Mammary epithelial cell (primary cell): ENCODE measurements at regions of chr16 and their contacts with region 1.

Region 1: GRCh38 chr16:84791088-84791487 is 28.7 kb upstream of the CRISPLD2 start:
- DNase-seq: no peak
- H3K4me3 ChIP-seq: no peak overlapping the region
- H3K27ac ChIP-seq: no peak overlapping the region
- H3K4me1 ChIP-seq: no peaks in the 10 kb centered on the region
- H3K27me3 ChIP-seq: no peaks in the 10 kb centered on the region
- CTCF ChIP-seq: no peak

Region 2: DNA sequence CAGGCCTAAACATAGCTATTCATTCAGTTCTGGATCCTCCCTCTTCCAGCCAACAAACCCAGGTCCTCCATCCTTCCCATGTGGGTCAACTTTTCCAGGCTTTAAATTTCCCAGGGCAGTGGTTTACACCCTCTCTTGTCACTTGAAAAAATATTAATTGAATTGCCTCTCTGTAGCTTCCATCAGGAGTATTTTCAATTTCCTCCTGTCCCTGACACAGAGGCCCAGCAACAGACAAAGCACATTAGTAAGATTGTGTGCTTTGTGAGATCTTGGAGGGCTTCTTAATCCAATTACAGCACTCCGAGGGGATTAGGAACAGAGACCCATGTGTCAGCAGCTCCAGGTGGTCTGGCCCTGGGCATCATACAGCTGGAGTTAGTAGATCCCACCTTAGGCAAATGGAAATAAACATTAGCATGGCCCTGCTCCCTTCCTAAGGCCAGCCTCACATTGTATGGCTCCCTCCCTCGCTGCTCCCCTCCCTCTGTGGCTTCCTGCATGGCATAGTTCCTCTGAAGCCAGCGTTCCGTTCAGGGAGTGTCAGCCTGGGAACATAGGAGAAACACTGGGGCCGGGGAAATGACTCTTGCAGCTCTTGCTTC is 1116.1 kb before region 1 on chr16:
- CTCF ChIA-PET with region 1: no interaction called
- dilution Hi-C with region 1: no loop called
- in situ Hi-C with region 1: no loop called
- intact Hi-C with region 1: no loop called
- DNase-seq: no peak
- H3K4me3 ChIP-seq: no peak overlapping the region
- H3K27ac ChIP-seq: no peak overlapping the region
- H3K4me1 ChIP-seq: no peaks in the 10 kb centered on the region
- H3K27me3 ChIP-seq: no peaks in the 10 kb centered on the region
- CTCF ChIP-seq: no peak

Region 3: DNA sequence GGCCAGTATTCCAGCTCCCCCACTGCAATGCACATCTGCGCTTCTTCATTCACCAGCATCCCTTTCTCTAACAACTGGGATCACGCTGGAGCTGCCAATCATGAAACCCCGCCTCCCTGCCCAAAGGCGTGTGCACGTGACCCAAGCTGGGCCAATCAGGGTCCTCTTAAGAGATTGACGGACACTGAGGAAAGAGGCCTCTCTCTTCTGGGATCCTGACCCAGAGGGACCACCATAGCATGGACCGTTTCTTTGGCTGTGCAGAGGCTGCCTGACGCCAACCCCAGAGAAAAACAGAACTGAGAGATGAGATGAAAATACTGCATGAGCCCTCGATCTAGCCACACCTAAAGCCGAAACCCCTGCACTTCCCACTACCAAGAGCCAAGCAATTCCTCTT is 205.2 kb before region 1 on chr16:
- CTCF ChIA-PET with region 1: no interaction called
- dilution Hi-C with region 1: no loop called
- in situ Hi-C with region 1: no loop called
- intact Hi-C with region 1: no loop called
- DNase-seq: no peak
- H3K4me3 ChIP-seq: no peak overlapping the region
- H3K27ac ChIP-seq: no peak overlapping the region
- H3K4me1 ChIP-seq: no peaks in the 10 kb centered on the region
- H3K27me3 ChIP-seq: no peaks in the 10 kb centered on the region
- CTCF ChIP-seq: no peak

Region 4: GRCh38 chr16:84829168-84829965 is 38.3 kb after region 1 on chr16:
- CTCF ChIA-PET with region 1: no interaction called
- dilution Hi-C with region 1: loop called (anchors 5 kb)
- in situ Hi-C with region 1: no loop called
- intact Hi-C with region 1: no loop called
- DNase-seq: no peak
- H3K4me3 ChIP-seq: no peak overlapping the region
- H3K27ac ChIP-seq: no peak overlapping the region
- H3K4me1 ChIP-seq: no peaks in the 10 kb centered on the region
- H3K27me3 ChIP-seq: no peaks in the 10 kb centered on the region
- CTCF ChIP-seq: no peak